Naive thymus-derived CD4-positive, alpha-beta T cell (primary cell): ENCODE measurements at regions of chrX and their contacts with region 1.

Region 1: GRCh38 chrX:154918060-154918483 is 31.9 kb downstream of the F8A1 start:
- DNase-seq: peak; percentile 3 to 45 (median 20)
- ATAC-seq: no peak
- H3K4me3 ChIP-seq: no peak overlapping the region
- H3K4me3 Mint-ChIP-seq: peak overlapping the region; percentile 43 to 79 (median 69)
- H3K27ac ChIP-seq: no peak overlapping the region
- H3K27ac Mint-ChIP-seq: peak overlapping the region in 1 of 9 donors; percentile 13
- H3K4me1 ChIP-seq: no peaks in the 10 kb centered on the region
- H3K4me1 Mint-ChIP-seq: peaks cover 0 to 7% (median 0%) of the 10 kb centered on the region in 7 donors
- H3K27me3 ChIP-seq: no peaks in the 10 kb centered on the region
- H3K27me3 Mint-ChIP-seq: peaks cover 0 to 14% (median 10%) of the 10 kb centered on the region in 5 donors

Region 2: DNA sequence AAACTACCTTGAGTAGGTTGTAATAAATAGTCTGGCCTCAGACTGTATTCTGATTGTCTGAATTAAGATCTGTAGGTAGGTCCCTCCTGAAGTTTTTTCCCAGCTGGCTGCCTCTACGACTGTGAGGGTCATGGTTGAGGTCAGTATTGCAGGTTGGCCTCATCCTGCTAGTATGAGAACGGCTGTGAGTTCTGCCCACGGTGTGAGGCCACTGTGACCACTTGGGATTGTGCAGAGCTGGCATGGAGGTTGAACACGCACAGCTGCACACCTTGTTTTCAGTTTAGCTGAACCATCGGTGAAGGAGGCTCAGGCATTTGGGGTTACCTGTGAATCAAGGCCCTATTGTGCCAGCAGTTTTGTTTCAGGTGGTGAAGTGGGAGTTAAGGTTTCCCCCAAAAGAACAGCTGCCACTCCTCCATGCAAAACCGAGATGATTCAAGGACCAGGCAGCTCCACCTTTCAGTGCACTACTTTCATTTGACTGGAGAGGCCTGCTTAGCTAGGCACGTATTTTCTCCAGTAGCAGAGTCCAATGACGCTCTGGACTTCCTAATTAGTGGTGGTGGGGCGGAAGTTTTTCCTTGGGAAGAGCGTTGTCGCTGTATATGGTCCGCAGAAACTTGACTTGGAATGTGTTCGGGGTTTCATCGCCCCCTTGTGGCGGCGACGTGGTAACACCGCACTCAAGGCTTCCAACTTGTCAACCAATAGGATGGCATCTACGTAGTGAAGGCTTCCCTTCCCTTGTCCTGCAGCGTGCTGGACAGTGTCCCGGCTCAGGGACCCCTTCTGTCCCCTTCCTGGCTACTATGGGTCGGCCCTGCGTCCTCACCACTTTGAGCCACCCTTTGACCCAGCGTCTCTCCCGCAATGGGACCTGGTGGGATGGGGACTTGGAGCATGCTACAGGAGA is 139.1 kb after region 1 on chrX:
- CTCF ChIA-PET with region 1: interaction called, 4 read pairs
- POLR2A ChIA-PET with region 1: no interaction called
- intact Hi-C with region 1: loop called (anchors 1 kb)
- DNase-seq: peak; percentile 20 to 55 (median 36)
- ATAC-seq: peak; percentile 93
- H3K4me3 ChIP-seq: peak overlapping the region; percentile 47
- H3K4me3 Mint-ChIP-seq: peak overlapping the region; percentile 52 to 81 (median 76)
- H3K27ac ChIP-seq: peak overlapping the region; percentile 30
- H3K27ac Mint-ChIP-seq: peak overlapping the region in 8 of 9 donors; percentile 23 to 81 (median 60)
- H3K4me1 ChIP-seq: peaks cover 0 to 5% of the 10 kb centered on the region in 2 donors
- H3K4me1 Mint-ChIP-seq: peaks cover 0 to 31% (median 21%) of the 10 kb centered on the region in 7 donors
- H3K27me3 ChIP-seq: no peaks in the 10 kb centered on the region
- H3K27me3 Mint-ChIP-seq: no peaks in the 10 kb centered on the region

Region 3: GRCh38 chrX:155086202-155086840 is 168.2 kb after region 1 on chrX:
- CTCF ChIA-PET with region 1: interaction called, 4 read pairs
- POLR2A ChIA-PET with region 1: no interaction called
- intact Hi-C with region 1: loop called in 1 of 2 experiments (anchors 1 kb)
- DNase-seq: peak in 8 of 9 donors; percentile 13 to 39 (median 22)
- ATAC-seq: peak; percentile 53
- H3K4me3 ChIP-seq: no peak overlapping the region
- H3K4me3 Mint-ChIP-seq: no peak overlapping the region
- H3K27ac ChIP-seq: no peak overlapping the region
- H3K27ac Mint-ChIP-seq: no peak overlapping the region
- H3K4me1 ChIP-seq: no peaks in the 10 kb centered on the region
- H3K4me1 Mint-ChIP-seq: peaks cover 0 to 6% (median 0%) of the 10 kb centered on the region in 7 donors
- H3K27me3 ChIP-seq: no peaks in the 10 kb centered on the region
- H3K27me3 Mint-ChIP-seq: no peaks in the 10 kb centered on the region

Region 4: DNA sequence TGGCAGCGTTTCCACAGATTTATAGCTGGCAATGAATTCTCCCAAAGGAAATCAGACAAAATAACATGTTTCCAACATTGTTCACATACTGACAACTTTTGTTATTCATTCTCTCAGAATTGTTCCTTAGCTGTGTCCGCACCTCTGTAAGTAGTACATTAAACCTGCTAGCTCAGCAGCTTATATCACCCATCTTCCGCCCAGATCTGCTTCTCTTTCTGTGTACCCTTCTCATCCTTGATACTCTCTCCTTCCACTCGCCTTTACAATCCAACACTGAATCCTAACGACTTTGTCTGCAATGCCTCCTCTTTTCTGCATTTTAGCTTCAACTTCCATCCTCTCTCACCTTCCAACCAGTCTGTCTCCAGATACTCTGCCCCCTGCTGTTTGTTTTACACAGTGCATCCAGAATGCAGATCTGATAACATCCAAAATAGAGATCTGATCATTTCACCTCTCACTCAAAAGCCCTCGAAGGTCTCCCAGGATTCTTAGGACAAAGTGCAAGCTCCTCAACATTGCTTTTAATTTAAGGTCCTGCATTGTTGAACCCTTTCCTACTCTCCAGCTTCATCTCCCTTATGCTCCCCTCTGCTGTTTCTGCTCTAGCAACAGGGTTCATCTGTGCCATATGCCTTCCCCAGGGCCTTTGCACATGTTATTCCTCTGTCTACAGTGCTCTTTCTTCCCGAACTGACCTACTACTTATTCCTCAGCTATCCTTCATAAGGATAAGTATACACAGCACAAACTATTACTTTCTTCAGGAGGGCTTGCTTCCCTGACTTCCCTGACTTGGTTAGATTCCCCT is 230.9 kb after region 1 on chrX:
- CTCF ChIA-PET with region 1: interaction called, 4 read pairs
- POLR2A ChIA-PET with region 1: no interaction called
- intact Hi-C with region 1: loop called in 1 of 2 experiments (anchors 10 kb)
- DNase-seq: peak in 8 of 9 donors; percentile 3 to 38 (median 25)
- ATAC-seq: peak; percentile 37
- H3K4me3 ChIP-seq: no peak overlapping the region
- H3K4me3 Mint-ChIP-seq: no peak overlapping the region
- H3K27ac ChIP-seq: no peak overlapping the region
- H3K27ac Mint-ChIP-seq: peak overlapping the region in 3 of 9 donors; percentile 38 to 73 (median 40)
- H3K4me1 ChIP-seq: no peaks in the 10 kb centered on the region
- H3K4me1 Mint-ChIP-seq: peaks cover 0 to 9% (median 4%) of the 10 kb centered on the region in 7 donors
- H3K27me3 ChIP-seq: no peaks in the 10 kb centered on the region
- H3K27me3 Mint-ChIP-seq: peaks cover 0 to 11% (median 0%) of the 10 kb centered on the region in 5 donors

Region 5: DNA sequence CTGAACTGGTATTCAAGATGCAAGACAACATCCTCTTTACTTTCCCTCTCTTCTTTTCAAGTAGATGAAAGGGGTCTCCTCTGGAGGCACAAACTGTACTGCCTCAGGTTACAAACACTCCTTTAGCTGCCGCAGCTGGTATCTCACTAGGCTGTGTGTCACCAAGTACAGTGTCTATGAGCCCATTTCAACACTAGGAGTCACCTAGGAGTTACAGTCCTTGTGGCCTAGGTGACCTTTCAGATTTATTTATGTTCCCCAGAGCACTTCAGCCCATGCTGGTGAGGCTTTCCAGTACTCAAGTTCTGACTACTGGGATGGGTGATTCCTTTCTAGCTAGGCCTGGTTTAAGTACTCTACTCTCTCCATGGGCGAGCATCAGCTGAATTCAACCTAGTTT is 727.1 kb after region 1 on chrX:
- CTCF ChIA-PET with region 1: no interaction called
- POLR2A ChIA-PET with region 1: no interaction called
- intact Hi-C with region 1: loop called in 1 of 2 experiments (anchors 5 kb)
- DNase-seq: no peak
- ATAC-seq: no peak
- H3K4me3 ChIP-seq: no peak overlapping the region
- H3K4me3 Mint-ChIP-seq: no peak overlapping the region
- H3K27ac ChIP-seq: no peak overlapping the region
- H3K27ac Mint-ChIP-seq: no peak overlapping the region
- H3K4me1 ChIP-seq: no peaks in the 10 kb centered on the region
- H3K4me1 Mint-ChIP-seq: peaks cover 0 to 12% (median 5%) of the 10 kb centered on the region in 7 donors
- H3K27me3 ChIP-seq: no peaks in the 10 kb centered on the region
- H3K27me3 Mint-ChIP-seq: peaks cover 0 to 5% (median 4%) of the 10 kb centered on the region in 5 donors

Region 6: DNA sequence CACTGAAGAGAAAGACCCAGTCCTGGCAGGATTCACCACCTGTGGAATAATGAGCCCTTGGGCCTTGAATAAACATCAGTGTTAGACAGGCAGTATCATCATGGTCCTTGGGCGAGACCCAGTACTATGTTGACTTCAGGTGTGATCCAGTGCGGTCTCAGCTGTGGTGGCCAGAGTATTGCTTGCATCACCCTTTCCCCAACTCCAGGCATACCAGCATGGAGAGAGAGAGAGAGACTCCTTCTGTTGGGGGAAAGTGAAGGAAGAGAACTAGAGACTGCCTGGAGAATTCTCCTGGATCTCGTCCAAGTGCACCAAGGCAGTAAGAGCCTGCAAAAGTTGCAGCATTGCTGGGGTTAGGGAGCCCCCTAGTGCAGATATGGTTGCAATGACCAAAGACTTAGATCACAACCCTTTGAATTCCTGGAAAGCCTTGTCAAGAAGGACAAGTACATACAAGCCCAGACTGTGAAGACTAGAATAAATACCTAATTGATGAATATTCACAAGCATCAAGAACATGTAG is 902.0 kb after region 1 on chrX:
- CTCF ChIA-PET with region 1: no interaction called
- POLR2A ChIA-PET with region 1: no interaction called
- intact Hi-C with region 1: loop called (anchors 1 to 2 kb)
- DNase-seq: peak in 7 of 9 donors; percentile 12 to 50 (median 39)
- ATAC-seq: peak; percentile 64
- H3K4me3 ChIP-seq: no peak overlapping the region
- H3K4me3 Mint-ChIP-seq: no peak overlapping the region
- H3K27ac ChIP-seq: no peak overlapping the region
- H3K27ac Mint-ChIP-seq: no peak overlapping the region
- H3K4me1 ChIP-seq: no peaks in the 10 kb centered on the region
- H3K4me1 Mint-ChIP-seq: peaks cover 0 to 3% (median 0%) of the 10 kb centered on the region in 7 donors
- H3K27me3 ChIP-seq: no peaks in the 10 kb centered on the region
- H3K27me3 Mint-ChIP-seq: peaks cover 8 to 32% (median 12%) of the 10 kb centered on the region in 5 donors